Gastrocnemius medialis (tissue), 4 donors: ENCODE measurements at regions of chr1 and their contacts with region 1.

Region 1: DNA sequence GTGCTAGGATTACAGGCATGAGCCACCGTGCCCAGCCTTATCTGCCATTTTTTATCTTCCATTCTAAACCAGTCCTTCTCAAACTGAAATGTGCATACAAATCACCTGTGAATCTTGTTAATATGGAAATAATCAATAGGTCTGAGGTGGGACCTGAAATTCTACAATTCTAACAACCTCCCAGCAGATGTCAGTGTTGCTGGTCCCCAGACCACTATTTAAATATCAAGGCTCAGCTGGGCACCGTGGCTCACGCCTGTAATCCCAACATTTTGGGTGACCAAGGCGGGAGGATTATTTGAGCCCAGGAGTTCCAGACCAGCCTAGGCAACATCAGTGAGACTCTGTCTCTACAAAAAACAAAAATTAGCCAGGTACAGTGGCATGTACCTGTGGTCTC is 4.1 kb downstream of the UQCRHL start:
- DNase-seq: no peak
- ATAC-seq: no peak
- H3K4me3 ChIP-seq: no peak overlapping the region
- H3K27ac ChIP-seq: no peak overlapping the region
- H3K4me1 ChIP-seq: peaks cover 10 to 17% of the 10 kb centered on the region in 2 donors
- H3K27me3 ChIP-seq: no peaks in the 10 kb centered on the region
- CTCF ChIP-seq: peak in 3 of 5 experiments; percentile 26 to 33 (median 29)
- POLR2A ChIP-seq: no peak

Region 2: DNA sequence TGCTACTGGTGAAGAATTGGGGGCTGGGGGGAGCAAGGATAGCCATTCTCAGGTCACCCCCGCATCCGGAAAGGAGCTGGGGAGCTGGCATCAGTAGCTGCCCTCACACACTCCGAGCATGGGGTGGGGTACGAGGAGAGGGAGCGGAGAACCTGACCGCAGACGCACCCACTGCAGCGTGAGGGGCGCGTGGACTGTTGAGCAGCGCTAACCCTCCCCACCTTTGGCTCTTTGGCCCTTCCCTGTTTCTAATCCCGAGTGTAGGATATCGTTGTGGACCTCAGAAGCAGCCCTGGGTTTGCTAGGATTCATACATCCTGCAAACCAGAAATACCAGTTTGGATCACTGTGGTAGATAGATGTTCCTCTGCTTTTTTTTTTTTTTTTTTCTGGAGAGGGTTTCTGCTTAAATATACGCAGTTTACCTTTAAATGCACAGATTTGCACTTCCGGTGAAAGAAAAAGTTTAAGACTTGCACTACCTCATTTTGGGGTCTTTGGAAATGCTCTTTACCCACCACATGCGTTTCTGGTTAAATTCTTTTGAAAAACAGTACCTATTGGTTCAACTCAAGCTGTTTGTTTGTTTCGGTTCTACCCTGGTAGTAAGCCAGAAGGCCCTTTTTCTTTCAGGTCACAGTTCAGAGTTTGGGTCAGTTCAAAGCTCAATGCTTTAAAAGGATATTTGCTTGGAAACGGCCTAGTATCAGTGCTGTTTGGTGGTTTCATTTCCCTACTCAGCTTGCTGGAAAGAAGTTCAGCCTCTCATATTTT is 185.3 kb before region 1 on chr1:
- in situ Hi-C with region 1: no loop called
- intact Hi-C with region 1: no loop called
- DNase-seq: peak; percentile 61 to 70
- ATAC-seq: peak; percentile 33 to 42
- H3K4me3 ChIP-seq: peak overlapping the region; percentile 71 to 93 (median 82)
- H3K27ac ChIP-seq: peak overlapping the region; percentile 93 to 98 (median 95)
- H3K4me1 ChIP-seq: peaks cover 39 to 51% of the 10 kb centered on the region in 2 donors
- H3K27me3 ChIP-seq: no peaks in the 10 kb centered on the region
- CTCF ChIP-seq: no peak
- POLR2A ChIP-seq: no peak

Region 3: GRCh38 chr1:15949453-15950245 is 146.3 kb after region 1 on chr1:
- in situ Hi-C with region 1: loop called in 1 of 4 experiments (anchors 25 kb)
- intact Hi-C with region 1: no loop called
- DNase-seq: peak; percentile 86 to 93
- ATAC-seq: peak; percentile 85
- H3K4me3 ChIP-seq: peak overlapping the region; percentile 21 to 50 (median 42)
- H3K27ac ChIP-seq: peak overlapping the region; percentile 84 to 87 (median 85)
- H3K4me1 ChIP-seq: peaks cover 58% of the 10 kb centered on the region in 2 donors
- H3K27me3 ChIP-seq: no peaks in the 10 kb centered on the region
- CTCF ChIP-seq: no peak
- POLR2A ChIP-seq: peak in 1 of 2 donors; percentile 59